Activated CD4-positive, alpha-beta memory T cell treated with anti-CD3 and anti-CD28 coated beads for 36 hours (primary cell): ENCODE measurements at regions of chr3 and their contacts with region 1.

Region 1: DNA sequence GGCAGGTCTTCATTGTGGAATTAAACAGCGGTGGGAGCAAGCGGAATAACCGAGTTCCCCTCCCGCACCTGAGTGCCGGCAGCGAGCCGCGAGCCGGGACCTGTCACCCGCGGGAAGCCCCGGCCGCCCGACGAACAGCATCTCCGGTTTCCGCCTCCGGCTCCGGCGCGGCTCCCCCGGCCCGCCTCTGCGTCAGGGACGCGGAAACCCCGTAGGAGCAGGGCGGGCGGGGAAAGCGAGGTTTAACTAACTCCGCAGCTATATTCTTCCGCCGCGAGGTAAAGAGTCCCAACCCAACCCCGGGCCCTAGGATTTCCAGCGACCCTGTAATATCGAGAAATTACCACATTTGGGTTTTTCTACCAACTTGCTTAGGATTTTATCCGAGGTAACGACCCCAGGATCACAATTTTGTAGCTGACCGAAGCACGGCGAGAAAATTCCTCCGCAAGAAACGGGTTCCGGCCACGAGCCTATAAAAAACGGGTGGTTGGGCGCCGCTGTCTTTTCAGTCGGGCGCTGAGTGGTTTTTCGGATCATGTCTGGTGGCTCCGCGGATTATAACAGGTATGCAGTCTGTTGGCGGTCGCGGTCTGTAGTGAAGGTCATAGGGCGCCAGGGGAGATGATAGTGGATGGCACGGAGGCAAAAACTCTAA is at the start of gene EIF4A2:
- DNase-seq: peak; percentile 92
- H3K4me3 Mint-ChIP-seq: peak within 1 kb of the TSS; percentile 97
- H3K27ac Mint-ChIP-seq: peak within 1 kb of the TSS; percentile 99
- H3K4me1 Mint-ChIP-seq: peaks cover 38% of the 10 kb centered on the region
- H3K27me3 Mint-ChIP-seq: no peaks in the 10 kb centered on the region
- total RNA-seq, gene EIF4A2: 390 to 393 TPM

Region 2: GRCh38 chr3:185937689-185938463 is 845.3 kb before region 1 on chr3 and contains the start of gene TRA2B:
- CTCF ChIA-PET with region 1: no interaction called
- POLR2A ChIA-PET with region 1: interaction called, 60 read pairs
- intact Hi-C with region 1: loop called (anchors 1 kb)
- DNase-seq: peak; percentile 99
- H3K4me3 Mint-ChIP-seq: peak within 1 kb of the TSS; percentile 99
- H3K27ac Mint-ChIP-seq: peak within 1 kb of the TSS; percentile 99
- H3K4me1 Mint-ChIP-seq: peaks cover 21% of the 10 kb centered on the region
- H3K27me3 Mint-ChIP-seq: peaks cover 3% of the 10 kb centered on the region
- total RNA-seq, gene TRA2B: 184 to 187 TPM

Region 3: GRCh38 chr3:186669378-186670084 is 113.7 kb before region 1 on chr3:
- CTCF ChIA-PET with region 1: no interaction called
- POLR2A ChIA-PET with region 1: no interaction called
- intact Hi-C with region 1: no loop called
- DNase-seq: no peak
- H3K4me3 Mint-ChIP-seq: no peak overlapping the region
- H3K27ac Mint-ChIP-seq: peak overlapping the region; percentile 28
- H3K4me1 Mint-ChIP-seq: peaks cover 17% of the 10 kb centered on the region
- H3K27me3 Mint-ChIP-seq: peaks cover 14% of the 10 kb centered on the region

Region 4: DNA sequence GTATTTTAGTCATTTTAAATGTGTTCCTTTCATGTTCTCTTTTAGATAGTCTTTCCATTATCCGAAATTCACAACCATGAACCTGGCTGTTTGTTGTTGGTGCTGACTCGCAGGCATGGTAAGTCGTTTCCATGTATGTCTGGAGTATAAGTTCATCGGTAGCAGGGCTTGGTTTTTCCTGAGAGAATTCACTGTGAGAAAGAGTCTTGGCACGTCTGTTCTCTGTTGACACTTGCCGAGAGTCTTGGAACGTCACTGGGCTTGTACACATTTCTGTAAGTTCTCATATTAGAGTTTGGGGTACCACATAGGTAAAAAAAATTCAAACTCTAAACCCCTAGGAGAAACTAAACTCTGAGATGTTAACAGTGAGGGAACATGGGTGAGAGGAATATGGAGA is 29.2 kb before region 1 on chr3:
- CTCF ChIA-PET with region 1: no interaction called
- POLR2A ChIA-PET with region 1: interaction called, 5 read pairs
- intact Hi-C with region 1: loop called (anchors 1 kb)
- DNase-seq: no peak
- H3K4me3 Mint-ChIP-seq: no peak overlapping the region
- H3K27ac Mint-ChIP-seq: peak overlapping the region; percentile 88
- H3K4me1 Mint-ChIP-seq: peaks cover 13% of the 10 kb centered on the region
- H3K27me3 Mint-ChIP-seq: peaks cover 6% of the 10 kb centered on the region

Region 5: GRCh38 chr3:186806089-186807055 is 23.2 kb after region 1 on chr3 and contains the start of gene RFC4:
- CTCF ChIA-PET with region 1: no interaction called
- POLR2A ChIA-PET with region 1: interaction called, 52 read pairs
- intact Hi-C with region 1: loop called (anchors 1 kb)
- DNase-seq: peak; percentile 91
- H3K4me3 Mint-ChIP-seq: peak within 1 kb of the TSS; percentile 93
- H3K27ac Mint-ChIP-seq: peak within 1 kb of the TSS; percentile 93
- H3K4me1 Mint-ChIP-seq: peaks cover 24% of the 10 kb centered on the region
- H3K27me3 Mint-ChIP-seq: no peaks in the 10 kb centered on the region
- total RNA-seq, gene RFC4: 118 to 127 TPM

Region 6: DNA sequence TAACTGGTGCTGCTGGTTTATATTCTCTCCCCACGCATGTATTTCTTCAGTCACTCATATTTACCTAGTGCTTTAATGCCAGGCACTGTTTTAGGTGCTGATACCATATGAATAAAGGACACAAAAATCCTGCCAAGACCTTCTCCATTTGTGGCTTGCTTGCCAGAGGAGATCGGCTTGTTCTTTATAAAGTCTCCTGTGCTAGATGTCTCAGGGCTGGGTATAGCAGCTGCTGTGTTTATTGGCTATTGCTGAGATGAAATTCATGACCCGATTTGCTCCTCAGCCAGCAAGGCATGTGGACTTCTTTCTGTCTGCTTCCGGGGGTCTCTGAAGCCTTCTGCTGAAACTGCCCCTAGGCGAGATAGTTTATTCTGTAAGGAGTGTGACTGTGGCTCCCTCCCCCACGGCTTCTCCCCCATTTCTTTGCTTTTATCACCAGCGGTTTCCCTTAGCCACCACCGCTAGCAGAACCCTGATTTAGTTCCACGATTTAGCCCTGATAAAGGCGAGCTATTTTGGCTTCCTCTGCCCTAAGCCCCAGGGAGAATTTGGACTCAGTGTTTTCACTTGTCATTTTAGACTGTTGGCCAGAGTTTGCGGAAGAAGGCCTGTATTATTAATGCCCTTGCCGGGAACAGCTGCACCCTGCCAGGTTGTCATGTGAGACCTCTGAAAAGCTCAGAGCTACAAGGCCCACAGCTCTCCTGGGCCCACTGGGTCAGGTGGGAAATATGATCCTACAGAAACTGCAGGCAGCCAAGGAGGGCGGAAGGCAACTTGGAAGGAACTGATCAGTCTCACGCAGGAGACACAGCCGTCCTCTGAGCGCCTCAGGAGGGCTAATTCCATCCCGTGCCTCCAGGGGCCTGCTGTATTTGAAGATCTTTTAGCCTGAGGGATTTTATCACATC is 193.9 kb after region 1 on chr3:
- CTCF ChIA-PET with region 1: no interaction called
- POLR2A ChIA-PET with region 1: no interaction called
- intact Hi-C with region 1: no loop called
- DNase-seq: no peak
- H3K4me3 Mint-ChIP-seq: no peak overlapping the region
- H3K27ac Mint-ChIP-seq: no peak overlapping the region
- H3K4me1 Mint-ChIP-seq: peaks cover 26% of the 10 kb centered on the region
- H3K27me3 Mint-ChIP-seq: no peaks in the 10 kb centered on the region

Region 7: DNA sequence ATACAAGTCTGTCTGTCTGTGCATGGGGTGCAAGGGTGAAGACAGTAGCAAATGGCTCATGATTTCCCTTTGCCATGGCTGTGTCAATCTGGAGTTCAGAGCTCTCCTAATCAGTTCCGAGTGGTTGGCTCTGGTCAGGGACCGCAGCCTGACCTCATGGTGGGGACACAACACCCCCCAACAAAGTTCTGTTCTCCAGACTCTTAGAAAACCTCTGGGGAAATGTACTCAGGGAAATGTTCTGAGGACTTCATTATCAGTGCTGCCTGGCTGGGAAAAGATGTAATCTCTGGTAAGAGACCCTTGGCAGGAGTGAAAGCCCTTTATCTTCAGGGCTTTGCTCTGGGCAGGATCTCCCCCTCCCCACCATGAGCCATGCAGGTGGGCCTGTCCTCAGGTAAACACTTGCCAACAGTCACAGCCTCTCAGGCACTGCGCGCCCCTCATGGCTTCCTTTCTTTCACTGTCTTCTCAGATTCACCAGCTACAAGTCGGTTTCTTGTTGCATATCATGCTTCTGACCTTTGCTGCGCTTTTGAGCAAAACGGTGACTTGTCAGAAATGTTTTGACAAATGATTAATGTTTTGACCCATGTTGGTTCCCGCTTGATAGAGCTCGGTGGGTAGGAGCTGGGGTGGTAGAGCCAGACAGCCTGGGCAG is 242.6 kb after region 1 on chr3:
- CTCF ChIA-PET with region 1: no interaction called
- POLR2A ChIA-PET with region 1: interaction called, 10 read pairs
- intact Hi-C with region 1: loop called (anchors 5 kb)
- DNase-seq: peak; percentile 59
- H3K4me3 Mint-ChIP-seq: peak overlapping the region; percentile 84
- H3K27ac Mint-ChIP-seq: peak overlapping the region; percentile 96
- H3K4me1 Mint-ChIP-seq: peaks cover 46% of the 10 kb centered on the region
- H3K27me3 Mint-ChIP-seq: no peaks in the 10 kb centered on the region